ENCODE measurements at regions of chr4 and their contacts with region 1.

Region 1: DNA sequence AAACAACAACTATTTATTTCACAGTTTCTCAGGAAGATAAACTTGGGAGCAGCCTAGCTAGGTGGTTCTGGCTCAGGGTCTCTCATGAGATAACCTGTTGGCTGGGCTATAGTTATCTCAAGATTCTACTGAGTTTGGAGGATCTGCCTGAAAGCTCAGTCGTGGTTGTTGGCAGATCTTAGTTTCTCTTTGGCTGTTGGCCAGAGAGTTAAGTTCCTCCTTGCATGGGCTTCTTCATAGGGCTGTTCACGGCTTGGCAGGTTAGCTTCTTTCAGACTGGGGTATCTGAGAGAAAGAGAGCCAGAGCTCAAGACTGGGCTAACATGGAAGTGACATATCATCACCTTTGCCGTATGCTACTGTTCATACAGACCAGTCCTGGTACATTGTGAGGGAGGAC is 28.7 kb downstream of the SEC24B start:
- DNase-seq: no peak
- ATAC-seq: no peak
- H3K4me3 ChIP-seq: no peak overlapping the region
- H3K4me3 Mint-ChIP-seq: no peak overlapping the region
- H3K27ac ChIP-seq: peak overlapping the region; percentile 18
- H3K27ac Mint-ChIP-seq: peak overlapping the region in 2 of 9 donors; percentile 10 to 33
- H3K4me1 ChIP-seq: no peaks in the 10 kb centered on the region
- H3K4me1 Mint-ChIP-seq: peaks cover 3 to 74% (median 46%) of the 10 kb centered on the region in 7 donors
- H3K27me3 ChIP-seq: no peaks in the 10 kb centered on the region
- H3K27me3 Mint-ChIP-seq: no peaks in the 10 kb centered on the region

Region 2: GRCh38 chr4:109441862-109442458 is 20.3 kb before region 1 on chr4:
- CTCF ChIA-PET with region 1: no interaction called
- POLR2A ChIA-PET with region 1: no interaction called
- intact Hi-C with region 1: loop called in 1 of 2 experiments (anchors 2 kb)
- DNase-seq: no peak
- ATAC-seq: no peak
- H3K4me3 ChIP-seq: no peak overlapping the region
- H3K4me3 Mint-ChIP-seq: peak overlapping the region in 3 of 10 donors; percentile 25 to 48 (median 35)
- H3K27ac ChIP-seq: no peak overlapping the region
- H3K27ac Mint-ChIP-seq: peak overlapping the region in 1 of 9 donors; percentile 66
- H3K4me1 ChIP-seq: peaks cover 19 to 29% of the 10 kb centered on the region in 2 donors
- H3K4me1 Mint-ChIP-seq: peaks cover 56 to 85% (median 83%) of the 10 kb centered on the region in 7 donors
- H3K27me3 ChIP-seq: no peaks in the 10 kb centered on the region
- H3K27me3 Mint-ChIP-seq: no peaks in the 10 kb centered on the region

Region 3: GRCh38 chr4:109497511-109497910 is 35.2 kb after region 1 on chr4:
- CTCF ChIA-PET with region 1: no interaction called
- POLR2A ChIA-PET with region 1: no interaction called
- intact Hi-C with region 1: loop called in 1 of 2 experiments (anchors 5 kb)
- DNase-seq: no peak
- ATAC-seq: no peak
- H3K4me3 ChIP-seq: no peak overlapping the region
- H3K4me3 Mint-ChIP-seq: no peak overlapping the region
- H3K27ac ChIP-seq: no peak overlapping the region
- H3K27ac Mint-ChIP-seq: peak overlapping the region in 2 of 9 donors; percentile 22 to 24
- H3K4me1 ChIP-seq: no peaks in the 10 kb centered on the region
- H3K4me1 Mint-ChIP-seq: peaks cover 0 to 6% (median 5%) of the 10 kb centered on the region in 7 donors
- H3K27me3 ChIP-seq: no peaks in the 10 kb centered on the region
- H3K27me3 Mint-ChIP-seq: no peaks in the 10 kb centered on the region